ENCODE measurements at regions of chr7 and their contacts with region 1.

Region 1: DNA sequence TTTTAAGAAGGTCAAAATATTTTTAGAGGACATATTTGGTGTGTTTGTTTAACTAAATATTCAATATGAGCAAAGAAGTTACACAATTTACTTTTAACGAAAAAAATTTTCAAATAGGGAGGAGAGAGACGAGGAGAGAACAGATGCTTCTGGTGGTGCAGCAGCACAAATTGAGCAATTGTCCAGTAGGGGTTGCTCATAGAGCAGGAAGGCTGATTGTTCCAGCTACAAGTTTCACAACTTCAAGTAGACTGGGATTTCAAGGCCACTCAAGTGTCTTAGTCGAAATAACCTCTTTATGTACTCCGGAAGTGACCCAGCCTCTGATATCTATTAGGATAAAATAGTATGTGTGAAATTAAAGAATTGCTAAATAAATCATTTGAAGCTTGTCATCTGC is 197.9 kb downstream of the HDAC9 start:
- DNase-seq: peak in 1 of 2 experiments; percentile 30
- H3K4me3 ChIP-seq: no peak overlapping the region
- H3K4me3 Mint-ChIP-seq: no peak overlapping the region
- H3K27ac Mint-ChIP-seq: no peak overlapping the region
- H3K4me1 ChIP-seq: no peaks in the 10 kb centered on the region
- H3K4me1 Mint-ChIP-seq: no peaks in the 10 kb centered on the region
- H3K27me3 ChIP-seq: no peaks in the 10 kb centered on the region
- H3K27me3 Mint-ChIP-seq: no peaks in the 10 kb centered on the region
- CTCF ChIP-seq: peak; percentile 24 to 56

Region 2: GRCh38 chr7:18727115-18727870 is 33.9 kb after region 1 on chr7:
- CTCF ChIA-PET with region 1: no interaction called
- POLR2A ChIA-PET with region 1: no interaction called
- intact Hi-C with region 1: loop called (anchors 1 kb)
- DNase-seq: no peak
- H3K4me3 ChIP-seq: no peak overlapping the region
- H3K4me3 Mint-ChIP-seq: no peak overlapping the region
- H3K27ac Mint-ChIP-seq: no peak overlapping the region
- H3K4me1 ChIP-seq: no peaks in the 10 kb centered on the region
- H3K4me1 Mint-ChIP-seq: no peaks in the 10 kb centered on the region
- H3K27me3 ChIP-seq: no peaks in the 10 kb centered on the region
- H3K27me3 Mint-ChIP-seq: no peaks in the 10 kb centered on the region
- CTCF ChIP-seq: no peak

Region 3: GRCh38 chr7:19051767-19052375 is 358.5 kb after region 1 on chr7:
- CTCF ChIA-PET with region 1: no interaction called
- POLR2A ChIA-PET with region 1: no interaction called
- intact Hi-C with region 1: loop called (anchors 1 kb)
- DNase-seq: peak; percentile 35 to 46
- H3K4me3 ChIP-seq: no peak overlapping the region
- H3K4me3 Mint-ChIP-seq: no peak overlapping the region
- H3K27ac Mint-ChIP-seq: no peak overlapping the region
- H3K4me1 ChIP-seq: no peaks in the 10 kb centered on the region
- H3K4me1 Mint-ChIP-seq: no peaks in the 10 kb centered on the region
- H3K27me3 ChIP-seq: no peaks in the 10 kb centered on the region
- H3K27me3 Mint-ChIP-seq: peaks cover under 1% of the 10 kb centered on the region
- CTCF ChIP-seq: peak; percentile 68 to 77

Region 4: GRCh38 chr7:19665399-19666008 is 972.1 kb after region 1 on chr7:
- CTCF ChIA-PET with region 1: no interaction called
- POLR2A ChIA-PET with region 1: no interaction called
- intact Hi-C with region 1: loop called (anchors 2 kb)
- DNase-seq: no peak
- H3K4me3 ChIP-seq: no peak overlapping the region
- H3K4me3 Mint-ChIP-seq: no peak overlapping the region
- H3K27ac Mint-ChIP-seq: no peak overlapping the region
- H3K4me1 ChIP-seq: no peaks in the 10 kb centered on the region
- H3K4me1 Mint-ChIP-seq: no peaks in the 10 kb centered on the region
- H3K27me3 ChIP-seq: no peaks in the 10 kb centered on the region
- H3K27me3 Mint-ChIP-seq: peaks cover 19% of the 10 kb centered on the region
- CTCF ChIP-seq: peak; percentile 52 to 58

Measured in Caco-2 (cell line).